ENCODE measurements at regions of chr1 and their contacts with region 1.

Region 1: DNA sequence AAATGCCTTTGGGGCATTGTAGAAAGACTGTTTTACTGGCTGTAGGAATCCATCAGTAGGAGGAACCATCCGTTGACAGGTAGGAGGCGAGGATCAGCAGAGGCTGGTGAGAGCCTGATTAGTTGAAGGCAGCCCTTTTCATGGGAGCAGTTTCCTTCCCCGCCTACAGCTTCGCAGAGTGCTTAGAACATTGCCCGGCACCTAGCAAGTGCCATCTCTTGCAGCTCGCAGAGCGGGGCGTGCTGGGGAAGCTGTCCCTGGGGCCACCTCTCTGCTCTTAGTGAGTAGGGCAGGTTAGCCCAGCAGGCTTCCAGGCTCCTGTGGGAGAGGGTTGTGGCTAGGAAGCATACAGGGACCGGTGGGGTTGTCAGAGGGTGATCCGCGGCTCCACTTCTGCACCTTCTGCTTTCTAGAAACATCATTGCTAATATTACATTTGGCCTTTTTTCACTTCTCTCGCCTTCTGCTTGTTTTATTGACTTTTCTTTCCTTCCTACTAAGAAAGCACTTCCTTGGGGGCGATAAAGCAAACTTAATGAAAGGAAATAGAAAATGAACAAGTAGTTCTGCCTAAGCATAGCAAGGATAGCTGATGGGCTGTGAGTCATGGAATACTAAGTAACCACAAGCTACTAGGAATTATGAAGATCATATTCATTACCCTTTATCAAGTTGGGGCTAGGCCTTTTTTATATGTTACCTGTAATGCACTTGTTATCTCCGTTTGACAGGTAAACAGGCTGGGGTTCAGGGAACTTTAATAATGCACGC is 176.7 kb downstream of the GALNT2 start:
- DNase-seq: no peak
- ATAC-seq: no peak
- H3K4me3 Mint-ChIP-seq: no peak overlapping the region
- H3K27ac Mint-ChIP-seq: peak overlapping the region; percentile 41
- H3K4me1 Mint-ChIP-seq: peaks cover 31% of the 10 kb centered on the region
- H3K27me3 Mint-ChIP-seq: no peaks in the 10 kb centered on the region

Region 2: GRCh38 chr1:230104395-230105244 is 139.1 kb before region 1 on chr1:
- CTCF ChIA-PET with region 1: interaction called, 3 read pairs
- POLR2A ChIA-PET with region 1: no interaction called
- intact Hi-C with region 1: loop called in 1 of 2 experiments (anchors 1 kb)
- DNase-seq: peak; percentile 95
- ATAC-seq: peak; percentile 78
- H3K4me3 Mint-ChIP-seq: peak overlapping the region; percentile 44
- H3K27ac Mint-ChIP-seq: peak overlapping the region; percentile 92
- H3K4me1 Mint-ChIP-seq: peaks cover 86% of the 10 kb centered on the region
- H3K27me3 Mint-ChIP-seq: no peaks in the 10 kb centered on the region

Region 3: GRCh38 chr1:230109895-230110667 is 133.7 kb before region 1 on chr1:
- CTCF ChIA-PET with region 1: interaction called, 3 read pairs
- POLR2A ChIA-PET with region 1: no interaction called
- intact Hi-C with region 1: loop called (anchors 1 to 5 kb)
- DNase-seq: peak; percentile 94
- ATAC-seq: peak; percentile 91
- H3K4me3 Mint-ChIP-seq: peak overlapping the region; percentile 48
- H3K27ac Mint-ChIP-seq: peak overlapping the region; percentile 94
- H3K4me1 Mint-ChIP-seq: peaks cover 88% of the 10 kb centered on the region
- H3K27me3 Mint-ChIP-seq: no peaks in the 10 kb centered on the region

Region 4: DNA sequence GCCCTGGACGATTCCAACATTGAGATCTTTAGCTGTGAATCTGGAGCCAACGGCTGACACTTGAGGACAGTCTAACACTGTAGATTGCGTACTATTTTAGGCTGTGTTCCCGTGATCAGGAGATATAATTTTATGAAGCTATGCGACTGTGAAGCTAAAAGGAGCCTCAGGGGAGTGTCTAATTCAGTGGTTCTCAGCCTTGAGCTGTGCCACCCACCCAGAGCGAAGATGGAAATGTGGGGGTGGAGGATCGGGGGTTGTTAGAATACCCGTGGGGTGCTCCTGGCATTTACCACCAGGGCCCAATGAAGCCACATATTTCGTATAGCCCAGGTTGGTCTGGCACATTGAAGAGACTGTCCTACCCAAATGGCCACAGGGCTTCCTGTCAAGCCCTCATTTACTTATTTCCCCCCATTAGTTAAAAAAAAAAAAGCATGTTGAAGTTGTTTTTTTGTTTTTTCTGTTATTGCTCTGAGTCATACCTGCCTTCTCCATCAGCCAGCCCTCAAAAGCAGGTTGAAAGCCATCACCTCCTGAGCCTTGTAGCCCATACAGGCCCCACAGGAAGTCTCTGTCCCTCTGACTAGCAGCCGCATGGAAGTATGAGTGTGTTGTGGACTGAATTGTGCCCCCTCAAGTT is 35.0 kb before region 1 on chr1:
- CTCF ChIA-PET with region 1: no interaction called
- POLR2A ChIA-PET with region 1: no interaction called
- intact Hi-C with region 1: loop called (anchors 1 kb)
- DNase-seq: peak; percentile 64
- ATAC-seq: peak; percentile 91
- H3K4me3 Mint-ChIP-seq: no peak overlapping the region
- H3K27ac Mint-ChIP-seq: peak overlapping the region; percentile 84
- H3K4me1 Mint-ChIP-seq: peaks cover 47% of the 10 kb centered on the region
- H3K27me3 Mint-ChIP-seq: no peaks in the 10 kb centered on the region

Region 5: GRCh38 chr1:230270559-230271281 is 27.0 kb after region 1 on chr1:
- CTCF ChIA-PET with region 1: no interaction called
- POLR2A ChIA-PET with region 1: no interaction called
- intact Hi-C with region 1: loop called in 1 of 2 experiments (anchors 1 kb)
- DNase-seq: peak; percentile 53
- ATAC-seq: peak; percentile 87
- H3K4me3 Mint-ChIP-seq: no peak overlapping the region
- H3K27ac Mint-ChIP-seq: peak overlapping the region; percentile 75
- H3K4me1 Mint-ChIP-seq: peaks cover 42% of the 10 kb centered on the region
- H3K27me3 Mint-ChIP-seq: no peaks in the 10 kb centered on the region

Region 6: GRCh38 chr1:230310381-230311163 is 66.8 kb after region 1 on chr1:
- CTCF ChIA-PET with region 1: no interaction called
- POLR2A ChIA-PET with region 1: no interaction called
- intact Hi-C with region 1: loop called in 1 of 2 experiments (anchors 2 kb)
- DNase-seq: peak; percentile 82
- ATAC-seq: peak; percentile 48
- H3K4me3 Mint-ChIP-seq: no peak overlapping the region
- H3K27ac Mint-ChIP-seq: no peak overlapping the region
- H3K4me1 Mint-ChIP-seq: peaks cover 15% of the 10 kb centered on the region
- H3K27me3 Mint-ChIP-seq: peaks cover 4% of the 10 kb centered on the region

Region 7: GRCh38 chr1:230359992-230360668 is 116.4 kb after region 1 on chr1:
- CTCF ChIA-PET with region 1: no interaction called
- POLR2A ChIA-PET with region 1: no interaction called
- intact Hi-C with region 1: no loop called
- DNase-seq: no peak
- ATAC-seq: no peak
- H3K4me3 Mint-ChIP-seq: no peak overlapping the region
- H3K27ac Mint-ChIP-seq: no peak overlapping the region
- H3K4me1 Mint-ChIP-seq: no peaks in the 10 kb centered on the region
- H3K27me3 Mint-ChIP-seq: no peaks in the 10 kb centered on the region